GM12878 (cell line): ENCODE measurements at regions of chr6 and their contacts with region 1.

Region 1: GRCh38 chr6:27753668-27754407 is 158.4 kb downstream of the OR2B2 start:
- DNase-seq: peak; percentile 72
- ATAC-seq: peak; percentile 84
- H3K4me3 ChIP-seq: peak overlapping the region; percentile 58
- H3K27ac ChIP-seq: peak overlapping the region; percentile 48
- H3K4me1 ChIP-seq: peaks cover 9% of the 10 kb centered on the region; the same call in 1 of the 2 replicates
- H3K27me3 ChIP-seq: no peaks in the 10 kb centered on the region
- CTCF ChIP-seq: peak in 2 of 3 experiments; percentile 5 to 15; a peak in 2 of 6 replicates
- EP300 ChIP-seq: no peak
- POLR2A ChIP-seq: peak; percentile 52; the same call in 1 of the 2 replicates
- RAD21 ChIP-seq: no peak

Region 2: DNA sequence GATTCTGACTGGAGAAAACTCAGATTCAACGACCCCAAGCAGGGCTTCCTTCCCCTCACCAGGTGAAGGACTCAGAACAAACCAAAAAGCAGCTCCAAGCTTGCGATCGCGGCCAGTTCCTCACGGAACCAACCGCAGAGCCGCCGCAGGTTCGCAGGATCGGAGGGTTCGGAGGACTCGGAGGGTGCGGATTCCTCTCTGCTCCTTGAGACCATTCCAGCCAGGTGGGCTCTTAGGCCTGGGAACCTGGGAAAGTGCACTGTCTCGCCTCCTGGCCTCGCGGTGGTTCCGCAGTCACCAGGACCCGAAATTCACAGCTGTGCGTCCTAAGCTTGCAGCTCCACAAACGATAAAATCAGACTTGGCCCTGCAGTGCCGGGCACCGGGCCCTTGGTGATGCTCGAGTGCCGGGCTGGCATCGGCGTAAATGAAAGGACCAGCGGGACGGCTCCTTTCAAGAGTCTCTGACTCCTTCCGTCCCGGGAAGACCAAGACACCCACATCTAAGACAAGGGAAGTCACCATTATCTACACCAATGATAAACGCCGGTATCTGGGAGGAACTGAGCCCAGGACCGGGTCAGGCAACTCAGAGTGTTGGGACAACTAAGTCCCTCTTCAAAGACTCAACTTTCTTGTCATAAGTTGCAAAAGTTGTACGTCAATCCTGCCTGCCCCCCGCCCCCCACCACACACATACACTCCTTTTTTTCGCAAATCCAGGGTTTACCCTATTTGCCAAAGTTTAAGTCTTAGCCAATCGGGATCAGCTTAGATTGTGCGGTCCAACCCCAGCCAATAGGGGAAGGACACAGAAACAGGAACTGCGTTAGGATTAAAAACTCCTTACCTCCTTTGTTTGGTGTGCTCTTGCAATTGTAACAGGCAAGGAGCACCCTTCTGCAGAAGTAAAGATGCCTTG is 576.1 kb before region 1 on chr6:
- CTCF ChIA-PET with region 1: interaction called, 13 read pairs
- POLR2A ChIA-PET with region 1: interaction called, 4 read pairs
- RAD21 ChIA-PET with region 1: interaction called, 4 read pairs
- SMC1A ChIA-PET with region 1: interaction called, 6 read pairs
- in situ Hi-C with region 1: no loop called
- intact Hi-C with region 1: no loop called
- DNase-seq: peak; percentile 61
- ATAC-seq: peak; percentile 89
- H3K4me3 ChIP-seq: peak overlapping the region; percentile 89
- H3K27ac ChIP-seq: peak overlapping the region; percentile 93
- H3K4me1 ChIP-seq: no peaks in the 10 kb centered on the region
- H3K27me3 ChIP-seq: no peaks in the 10 kb centered on the region
- CTCF ChIP-seq: peak; percentile 65 to 72 (median 70)
- EP300 ChIP-seq: no peak
- POLR2A ChIP-seq: peak; percentile 56; the same call in 1 of the 2 replicates
- RAD21 ChIP-seq: peak; percentile 54

Region 3: DNA sequence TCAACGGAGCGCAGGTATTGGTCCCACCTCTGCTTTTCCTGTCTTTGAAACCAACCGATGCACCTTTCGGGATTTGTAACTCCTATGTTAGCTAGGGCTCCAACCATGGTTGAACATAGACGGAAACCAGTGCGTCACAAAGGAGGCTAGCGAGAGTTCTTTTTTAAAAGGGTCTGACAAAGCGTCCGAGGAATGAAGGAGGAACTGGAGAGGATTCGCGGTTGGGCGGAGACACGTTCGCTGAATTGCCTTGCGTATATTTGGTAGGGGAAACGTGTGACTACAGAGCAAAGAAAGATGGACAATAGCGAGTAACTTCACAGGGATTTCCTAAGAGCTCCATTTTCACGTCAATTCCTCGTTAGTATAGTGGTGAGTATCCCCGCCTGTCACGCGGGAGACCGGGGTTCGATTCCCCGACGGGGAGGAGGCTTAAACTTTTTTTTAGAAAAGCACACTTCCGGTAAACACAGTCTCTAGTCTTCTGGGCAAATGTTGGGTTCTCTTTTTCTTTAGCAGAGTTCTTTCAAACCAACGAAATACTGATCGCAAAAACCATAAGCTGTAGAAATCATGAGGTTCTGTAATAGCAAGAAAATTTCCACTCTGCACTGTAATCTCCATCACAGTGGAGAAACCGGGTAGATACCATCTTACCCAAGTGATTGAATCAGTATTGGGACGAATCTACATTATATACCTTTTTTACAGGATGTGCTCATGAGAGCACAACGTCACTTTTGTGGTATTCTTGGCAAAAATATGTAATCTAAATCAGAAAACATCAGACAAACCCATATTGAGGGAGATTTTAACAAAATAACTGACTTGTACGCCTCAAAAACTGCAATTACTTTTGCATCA is 274.3 kb before region 1 on chr6:
- CTCF ChIA-PET with region 1: interaction called, 5 read pairs
- POLR2A ChIA-PET with region 1: interaction called, 3 read pairs
- RAD21 ChIA-PET with region 1: interaction called, 6 read pairs
- SMC1A ChIA-PET with region 1: no interaction called
- in situ Hi-C with region 1: no loop called
- intact Hi-C with region 1: loop called (anchors 2 kb)
- DNase-seq: peak; percentile 97
- ATAC-seq: peak; percentile 86
- H3K4me3 ChIP-seq: peak overlapping the region; percentile 78
- H3K27ac ChIP-seq: peak overlapping the region; percentile 91
- H3K4me1 ChIP-seq: no peaks in the 10 kb centered on the region
- H3K27me3 ChIP-seq: no peaks in the 10 kb centered on the region
- CTCF ChIP-seq: no peak
- EP300 ChIP-seq: no peak; a peak in 1 of 4 replicates
- POLR2A ChIP-seq: peak; percentile 42
- RAD21 ChIP-seq: no peak

Region 4: DNA sequence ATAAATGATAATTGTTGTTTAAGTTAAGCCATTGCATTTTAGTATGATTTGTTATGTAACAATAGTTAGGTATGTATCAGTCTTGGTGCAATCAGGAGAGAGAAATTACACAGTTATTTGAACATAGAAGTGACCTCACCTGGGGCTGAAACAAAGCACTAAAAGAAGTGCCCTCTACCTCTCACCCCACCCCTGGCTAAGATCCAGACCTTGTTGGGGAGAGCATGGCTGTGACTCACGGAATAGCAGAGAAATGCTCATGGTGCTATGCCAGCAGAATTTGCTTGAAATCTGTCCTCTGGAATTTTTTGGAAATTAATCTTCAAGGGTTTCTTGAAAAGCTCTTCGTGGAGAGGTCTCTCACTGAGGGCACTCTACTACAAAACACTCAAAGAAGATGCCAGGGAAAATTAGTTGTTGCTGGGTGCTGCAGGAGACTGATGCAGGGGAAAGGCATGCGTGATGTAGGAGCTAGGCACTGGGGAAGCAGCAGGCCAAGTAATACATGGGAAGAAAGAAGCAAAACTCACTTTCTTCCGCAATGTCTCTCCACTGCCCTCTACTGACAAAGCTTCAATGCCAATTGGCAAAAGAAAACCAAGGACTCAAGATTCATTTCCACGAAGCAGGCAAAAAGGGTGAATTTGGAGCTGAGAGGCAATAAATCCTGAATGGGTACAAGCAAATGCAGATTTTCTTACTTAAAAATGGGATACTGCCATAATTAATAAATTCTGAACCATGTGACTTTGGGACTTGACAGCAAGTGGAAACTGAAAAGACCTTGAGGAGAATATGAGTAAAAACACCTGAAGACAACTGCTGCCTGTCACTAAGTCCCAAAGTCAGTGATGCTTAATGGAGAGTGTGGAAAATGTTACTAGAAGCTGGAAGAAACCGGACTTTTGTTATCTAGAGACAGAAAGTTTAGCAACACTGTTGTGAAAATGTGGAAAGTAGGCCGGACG is 144.6 kb before region 1 on chr6:
- CTCF ChIA-PET with region 1: interaction called, 11 read pairs
- POLR2A ChIA-PET with region 1: interaction called, 3 read pairs
- RAD21 ChIA-PET with region 1: interaction called, 8 read pairs
- SMC1A ChIA-PET with region 1: interaction called, 7 read pairs
- in situ Hi-C with region 1: no loop called
- intact Hi-C with region 1: loop called (anchors 5 kb)
- DNase-seq: peak; percentile 56
- ATAC-seq: peak; percentile 65
- H3K4me3 ChIP-seq: no peak overlapping the region
- H3K27ac ChIP-seq: no peak overlapping the region
- H3K4me1 ChIP-seq: no peaks in the 10 kb centered on the region
- H3K27me3 ChIP-seq: no peaks in the 10 kb centered on the region
- CTCF ChIP-seq: peak; percentile 82 to 90 (median 90)
- EP300 ChIP-seq: no peak
- POLR2A ChIP-seq: no peak
- RAD21 ChIP-seq: peak; percentile 82

Region 5: DNA sequence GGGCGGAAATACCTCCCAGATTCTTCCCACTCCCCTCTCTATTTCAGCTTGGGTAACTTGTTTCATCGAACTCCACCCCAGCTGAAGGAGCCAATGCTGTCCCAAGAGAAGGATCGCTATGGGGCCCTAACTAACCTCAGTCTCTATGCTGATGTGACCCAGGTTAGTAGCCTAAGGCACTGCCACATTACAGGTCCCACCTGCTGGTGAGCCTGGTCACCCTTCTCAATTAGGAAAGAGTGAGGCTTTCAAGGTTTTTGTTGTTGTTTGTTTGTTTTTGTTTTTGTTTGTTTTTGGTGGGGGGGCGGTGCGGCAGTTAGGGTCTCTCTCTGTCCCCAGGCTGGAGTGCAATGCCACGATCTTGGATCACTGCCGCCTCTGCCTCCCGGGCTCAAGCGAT is 10.0 kb before region 1 on chr6:
- CTCF ChIA-PET with region 1: interaction called, 12 read pairs
- POLR2A ChIA-PET with region 1: interaction called, 6 read pairs
- RAD21 ChIA-PET with region 1: interaction called, 12 read pairs
- SMC1A ChIA-PET with region 1: interaction called, 13 read pairs
- in situ Hi-C with region 1: no loop called
- intact Hi-C with region 1: no loop called
- DNase-seq: no peak
- ATAC-seq: peak; percentile 28; the same call in 1 of the 3 replicates
- H3K4me3 ChIP-seq: no peak overlapping the region
- H3K27ac ChIP-seq: no peak overlapping the region
- H3K4me1 ChIP-seq: no peaks in the 10 kb centered on the region
- H3K27me3 ChIP-seq: no peaks in the 10 kb centered on the region
- CTCF ChIP-seq: no peak
- EP300 ChIP-seq: no peak
- POLR2A ChIP-seq: no peak
- RAD21 ChIP-seq: no peak

Region 6: GRCh38 chr6:27795697-27796494 is 42.1 kb after region 1 on chr6:
- CTCF ChIA-PET with region 1: interaction called, 4 read pairs
- POLR2A ChIA-PET with region 1: interaction called, 9 read pairs
- RAD21 ChIA-PET with region 1: interaction called, 55 read pairs
- SMC1A ChIA-PET with region 1: interaction called, 30 read pairs
- in situ Hi-C with region 1: no loop called
- intact Hi-C with region 1: no loop called
- DNase-seq: peak; percentile 91
- ATAC-seq: peak; percentile 62
- H3K4me3 ChIP-seq: no peak overlapping the region
- H3K27ac ChIP-seq: no peak overlapping the region
- H3K4me1 ChIP-seq: peaks cover 22% of the 10 kb centered on the region
- H3K27me3 ChIP-seq: no peaks in the 10 kb centered on the region
- CTCF ChIP-seq: peak; percentile 69 to 80 (median 80)
- EP300 ChIP-seq: peak in 1 of 2 experiments; percentile 75; a peak in 1 of 4 replicates
- POLR2A ChIP-seq: no peak
- RAD21 ChIP-seq: peak; percentile 77

Region 7: DNA sequence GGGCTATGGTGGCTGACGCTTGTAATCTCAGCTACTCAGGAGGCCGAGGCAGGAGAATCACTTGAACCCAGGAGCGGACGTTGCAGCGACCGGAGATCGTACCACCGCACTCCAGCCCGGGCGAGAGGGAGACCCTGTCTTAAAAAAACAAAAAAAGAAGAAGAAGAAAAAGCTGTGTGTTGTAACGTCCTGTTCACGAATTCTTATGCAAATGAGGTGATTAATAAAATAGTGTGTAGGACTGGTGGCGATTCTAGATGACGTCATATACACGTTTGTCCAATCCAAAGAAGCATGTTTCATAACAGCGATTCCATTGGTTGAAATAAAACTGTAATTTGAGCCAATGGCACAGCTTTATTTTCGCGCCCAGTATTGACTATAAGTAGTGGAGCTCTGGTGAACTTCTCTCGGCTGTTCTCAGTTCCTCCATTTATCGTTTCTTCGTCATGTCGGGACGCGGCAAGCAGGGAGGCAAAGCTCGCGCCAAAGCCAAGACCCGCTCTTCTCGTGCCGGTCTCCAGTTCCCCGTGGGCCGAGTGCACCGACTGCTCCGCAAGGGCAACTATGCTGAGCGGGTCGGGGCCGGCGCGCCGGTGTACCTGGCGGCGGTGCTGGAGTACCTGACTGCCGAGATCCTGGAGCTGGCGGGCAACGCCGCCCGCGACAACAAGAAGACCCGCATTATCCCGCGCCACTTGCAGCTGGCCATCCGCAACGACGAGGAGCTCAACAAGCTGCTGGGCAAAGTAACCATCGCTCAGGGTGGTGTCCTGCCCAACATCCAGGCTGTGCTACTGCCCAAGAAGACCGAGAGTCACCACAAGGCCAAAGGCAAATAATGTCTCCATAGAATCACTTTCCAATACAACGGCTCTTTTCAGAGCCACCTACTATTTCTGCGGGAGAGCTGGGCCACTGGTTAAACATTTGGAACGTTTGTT is 111.3 kb after region 1 on chr6:
- CTCF ChIA-PET with region 1: no interaction called
- POLR2A ChIA-PET with region 1: no interaction called
- RAD21 ChIA-PET with region 1: no interaction called
- SMC1A ChIA-PET with region 1: no interaction called
- in situ Hi-C with region 1: no loop called
- intact Hi-C with region 1: no loop called
- DNase-seq: peak; percentile 99
- ATAC-seq: peak; percentile 63
- H3K4me3 ChIP-seq: peak overlapping the region; percentile 75
- H3K27ac ChIP-seq: peak overlapping the region; percentile 95
- H3K4me1 ChIP-seq: peaks cover 39% of the 10 kb centered on the region
- H3K27me3 ChIP-seq: no peaks in the 10 kb centered on the region
- CTCF ChIP-seq: no peak
- EP300 ChIP-seq: no peak
- POLR2A ChIP-seq: peak; percentile 94
- RAD21 ChIP-seq: no peak